CD8-positive, alpha-beta T cell (primary cell): ENCODE measurements at regions of chr13 and their contacts with region 1.

Region 1: DNA sequence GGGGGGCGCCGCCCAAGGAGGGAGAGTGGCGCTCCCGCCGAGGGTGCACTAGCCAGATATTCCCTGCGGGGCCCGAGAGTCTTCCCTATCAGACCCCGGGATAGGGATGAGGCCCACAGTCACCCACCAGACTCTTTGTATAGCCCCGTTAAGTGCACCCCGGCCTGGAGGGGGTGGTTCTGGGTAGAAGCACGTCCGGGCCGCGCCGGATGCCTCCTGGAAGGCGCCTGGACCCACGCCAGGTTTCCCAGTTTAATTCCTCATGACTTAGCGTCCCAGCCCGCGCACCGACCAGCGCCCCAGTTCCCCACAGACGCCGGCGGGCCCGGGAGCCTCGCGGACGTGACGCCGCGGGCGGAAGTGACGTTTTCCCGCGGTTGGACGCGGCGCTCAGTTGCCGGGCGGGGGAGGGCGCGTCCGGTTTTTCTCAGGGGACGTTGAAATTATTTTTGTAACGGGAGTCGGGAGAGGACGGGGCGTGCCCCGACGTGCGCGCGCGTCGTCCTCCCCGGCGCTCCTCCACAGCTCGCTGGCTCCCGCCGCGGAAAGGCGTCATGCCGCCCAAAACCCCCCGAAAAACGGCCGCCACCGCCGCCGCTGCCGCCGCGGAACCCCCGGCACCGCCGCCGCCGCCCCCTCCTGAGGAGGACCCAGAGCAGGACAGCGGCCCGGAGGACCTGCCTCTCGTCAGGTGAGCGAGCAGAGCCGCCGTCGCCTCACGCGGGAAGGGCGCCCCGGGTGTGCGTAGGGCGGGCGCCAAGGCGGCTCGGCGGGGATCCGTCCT is at the start of gene RB1:
- DNase-seq: peak; percentile 81 to 97 (median 90)
- ATAC-seq: peak; percentile 79
- H3K4me3 ChIP-seq: peak within 1 kb of the TSS; percentile 83 to 95
- H3K4me3 Mint-ChIP-seq: peak within 1 kb of the TSS; percentile 98
- H3K27ac ChIP-seq: peak within 1 kb of the TSS; percentile 97 to 99
- H3K27ac Mint-ChIP-seq: peak within 1 kb of the TSS; percentile 97
- H3K4me1 ChIP-seq: peaks cover 17% of the 10 kb centered on the region
- H3K4me1 Mint-ChIP-seq: peaks cover 39% of the 10 kb centered on the region
- H3K27me3 ChIP-seq: no peaks in the 10 kb centered on the region
- H3K27me3 Mint-ChIP-seq: no peaks in the 10 kb centered on the region
- CTCF ChIP-seq: no peak
- total RNA-seq, gene RB1: 11.5 to 12.5 TPM

Region 2: DNA sequence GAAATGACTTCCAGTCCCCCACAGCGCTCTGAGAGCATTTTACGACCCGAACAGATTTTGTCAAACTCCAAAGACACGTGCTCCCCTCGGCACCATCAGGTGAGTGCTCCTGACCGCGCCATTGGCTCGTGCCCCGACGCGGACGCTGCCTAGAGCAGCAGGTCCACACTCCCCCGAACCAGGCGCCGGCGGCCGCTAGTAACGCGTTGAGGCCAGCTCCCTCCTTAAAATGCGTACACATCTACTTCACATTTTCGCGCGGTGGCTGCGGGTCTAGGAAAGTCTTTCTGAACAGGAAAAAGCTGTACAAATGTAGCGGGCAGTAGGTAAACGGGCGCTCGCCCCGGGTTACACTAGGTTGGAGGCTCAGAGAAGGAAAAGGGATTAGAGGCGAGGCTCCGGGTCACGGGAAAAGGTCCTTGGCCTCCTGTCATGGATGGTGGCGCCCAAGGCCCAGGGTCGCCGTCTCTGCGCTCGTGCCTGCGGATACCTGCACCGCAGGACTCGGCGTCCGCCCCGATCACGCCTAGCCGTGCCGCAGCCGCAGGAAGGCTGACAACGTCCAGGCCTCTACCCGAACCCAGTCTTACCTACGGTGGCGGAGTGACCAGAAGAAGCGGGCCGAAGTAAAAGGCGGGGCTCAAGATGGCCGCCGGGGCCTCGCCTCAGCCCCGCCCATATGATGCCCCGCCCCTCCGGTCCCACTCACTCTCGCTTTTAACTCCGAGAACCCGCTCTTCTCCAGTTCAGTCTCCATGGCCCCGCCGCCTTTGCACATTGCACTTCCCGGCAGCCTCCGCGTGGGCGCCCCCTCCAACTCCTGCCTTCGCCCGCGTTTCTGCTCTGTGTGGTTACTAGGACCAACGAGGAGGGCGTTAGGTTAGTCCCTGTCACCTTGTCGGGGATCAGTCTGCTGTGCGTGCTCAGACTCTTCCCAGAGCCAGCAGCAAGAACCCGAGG is 1506.8 kb before region 1 on chr13 and contains the start of gene ESD:
- CTCF ChIA-PET with region 1: no interaction called
- POLR2A ChIA-PET with region 1: no interaction called
- intact Hi-C with region 1: loop called in 1 of 2 experiments (anchors 5 kb)
- DNase-seq: peak; percentile 74 to 92 (median 89)
- ATAC-seq: peak; percentile 94
- H3K4me3 ChIP-seq: peak within 1 kb of the TSS; percentile 76 to 93
- H3K4me3 Mint-ChIP-seq: peak within 1 kb of the TSS; percentile 99
- H3K27ac ChIP-seq: peak within 1 kb of the TSS; percentile 71 to 77
- H3K27ac Mint-ChIP-seq: peak within 1 kb of the TSS; percentile 99
- H3K4me1 ChIP-seq: peaks cover 35% of the 10 kb centered on the region
- H3K4me1 Mint-ChIP-seq: peaks cover 44% of the 10 kb centered on the region
- H3K27me3 ChIP-seq: no peaks in the 10 kb centered on the region
- H3K27me3 Mint-ChIP-seq: no peaks in the 10 kb centered on the region
- CTCF ChIP-seq: no peak
- total RNA-seq, gene ESD: 30.5 to 31.0 TPM

Region 3: DNA sequence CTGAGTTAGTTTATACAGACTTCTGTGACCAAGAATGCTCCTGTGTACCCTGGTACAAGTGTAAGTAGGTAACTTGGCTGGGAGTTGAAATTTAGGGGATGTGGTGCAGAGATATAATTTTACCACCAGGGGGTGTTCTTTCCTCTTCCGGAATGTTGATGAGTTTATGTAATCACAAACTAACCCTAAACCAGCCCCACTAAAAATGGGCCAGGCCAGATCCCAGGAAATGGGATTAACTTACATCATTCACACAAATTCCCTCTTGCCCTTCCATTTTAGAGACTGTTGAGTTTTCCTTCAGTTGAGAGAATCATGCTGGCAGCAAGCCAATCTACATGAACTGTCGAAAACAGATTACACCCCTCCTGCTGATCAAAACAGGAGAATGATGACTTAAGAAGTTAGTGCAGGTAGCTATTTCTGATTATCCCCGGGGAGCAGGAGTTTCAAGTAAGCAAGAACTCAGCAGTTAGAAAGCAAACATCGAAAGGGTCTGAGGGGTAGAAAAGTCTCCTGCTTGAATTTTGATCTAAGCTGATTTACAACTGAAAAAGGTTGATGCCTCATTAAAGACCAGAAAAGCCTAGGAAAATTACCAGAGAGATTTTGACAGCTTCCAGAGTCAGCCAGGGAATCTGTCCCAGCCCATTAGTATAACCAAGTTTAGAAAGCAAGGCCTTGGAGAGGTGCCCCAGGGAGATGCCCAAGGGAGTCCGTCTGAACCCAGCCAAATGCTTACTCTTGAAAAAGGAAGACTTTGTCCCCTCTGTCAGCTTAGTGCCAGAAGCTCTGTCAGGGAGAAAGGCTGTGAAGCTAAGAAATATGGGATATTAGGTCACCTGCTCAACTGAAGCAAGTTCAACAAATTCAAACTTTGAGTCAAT is 176.4 kb before region 1 on chr13:
- CTCF ChIA-PET with region 1: interaction called, 3 read pairs
- POLR2A ChIA-PET with region 1: no interaction called
- intact Hi-C with region 1: loop called (anchors 1 to 5 kb)
- DNase-seq: peak; percentile 11 to 84 (median 39)
- ATAC-seq: peak; percentile 93
- H3K4me3 ChIP-seq: peak overlapping the region in 1 of 2 experiments; percentile 6
- H3K4me3 Mint-ChIP-seq: peak overlapping the region; percentile 55
- H3K27ac ChIP-seq: peak overlapping the region; percentile 30 to 75
- H3K27ac Mint-ChIP-seq: peak overlapping the region; percentile 94
- H3K4me1 ChIP-seq: peaks cover 13% of the 10 kb centered on the region
- H3K4me1 Mint-ChIP-seq: peaks cover 31% of the 10 kb centered on the region
- H3K27me3 ChIP-seq: no peaks in the 10 kb centered on the region
- H3K27me3 Mint-ChIP-seq: no peaks in the 10 kb centered on the region
- CTCF ChIP-seq: peak; percentile 80

Region 4: DNA sequence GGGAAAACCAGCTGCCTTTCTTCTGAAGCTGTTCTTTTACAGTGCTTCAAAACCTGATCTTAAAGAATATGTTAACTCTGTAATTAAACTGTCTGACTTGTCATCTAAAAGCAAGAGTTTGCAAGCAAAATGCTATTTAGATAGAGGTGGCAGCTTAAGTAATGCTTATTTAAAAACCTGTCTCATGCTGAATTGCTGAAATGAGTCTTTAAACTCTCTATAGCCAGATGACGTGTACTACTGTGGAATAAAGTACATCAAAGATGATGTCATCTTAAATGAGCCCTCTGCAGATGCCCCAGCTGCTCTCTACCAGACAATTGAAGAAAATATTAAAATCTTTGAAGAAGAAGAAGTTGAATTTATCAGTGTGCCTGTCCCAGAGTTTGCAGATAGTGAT is 47.6 kb before region 1 on chr13:
- CTCF ChIA-PET with region 1: no interaction called
- POLR2A ChIA-PET with region 1: no interaction called
- intact Hi-C with region 1: loop called (anchors 5 kb)
- DNase-seq: no peak
- ATAC-seq: peak; percentile 40
- H3K4me3 ChIP-seq: no peak overlapping the region
- H3K4me3 Mint-ChIP-seq: no peak overlapping the region
- H3K27ac ChIP-seq: no peak overlapping the region
- H3K27ac Mint-ChIP-seq: peak overlapping the region; percentile 53
- H3K4me1 ChIP-seq: peaks cover 35% of the 10 kb centered on the region
- H3K4me1 Mint-ChIP-seq: peaks cover 79% of the 10 kb centered on the region
- H3K27me3 ChIP-seq: no peaks in the 10 kb centered on the region
- H3K27me3 Mint-ChIP-seq: no peaks in the 10 kb centered on the region
- CTCF ChIP-seq: no peak

Region 5: DNA sequence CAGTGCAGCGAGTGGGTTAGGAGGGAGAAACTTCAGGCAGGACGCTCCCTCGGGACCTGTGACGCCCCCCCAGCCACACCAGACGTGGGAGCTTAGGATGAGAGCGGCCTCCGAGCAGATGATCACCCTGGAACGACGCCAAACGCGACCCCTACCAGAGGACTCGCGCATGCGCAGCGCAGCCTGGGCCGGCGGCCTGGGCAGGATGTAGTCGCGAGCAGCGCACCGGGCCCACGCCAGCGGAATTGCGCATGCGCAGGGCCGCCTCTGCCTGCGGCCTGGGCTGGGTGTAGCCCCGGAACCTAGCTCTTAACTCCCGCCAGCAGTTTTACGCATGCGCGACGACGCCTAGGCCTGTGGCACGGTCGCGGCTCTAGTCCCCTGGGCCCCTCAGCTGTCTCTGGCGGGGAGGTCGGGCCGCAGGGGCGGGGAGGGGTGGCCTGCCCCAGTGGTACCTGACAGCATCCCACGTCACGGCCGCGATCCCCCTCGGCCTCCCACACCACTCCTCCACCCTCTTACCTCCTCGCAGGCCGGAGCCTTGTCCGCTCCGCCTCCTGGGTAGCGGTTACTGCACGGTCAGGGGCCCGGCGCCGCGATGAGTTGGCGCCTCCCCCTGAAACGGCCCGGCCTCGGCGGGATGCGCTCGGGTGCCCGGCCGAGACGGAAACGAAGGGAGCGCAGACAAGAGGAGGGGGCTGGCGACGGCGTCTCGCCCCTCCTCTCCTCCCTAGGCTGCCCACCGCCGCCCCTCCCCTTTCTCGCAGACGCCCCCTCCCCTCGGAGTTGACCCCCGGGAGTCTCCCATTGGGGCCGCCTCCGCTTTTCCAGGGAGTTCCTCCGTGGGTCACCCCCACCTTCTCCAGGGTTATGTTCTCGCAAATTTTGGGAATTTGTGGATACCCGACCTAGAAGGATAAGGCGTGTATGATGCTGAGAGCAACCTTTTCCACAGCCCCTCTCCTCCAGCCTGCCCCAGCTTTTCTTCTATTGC is 229.3 kb after region 1 on chr13 and contains the start of gene RCBTB2:
- CTCF ChIA-PET with region 1: no interaction called
- POLR2A ChIA-PET with region 1: no interaction called
- intact Hi-C with region 1: loop called in 1 of 2 experiments (anchors 1 kb)
- DNase-seq: peak; percentile 95 to 100 (median 99)
- ATAC-seq: peak; percentile 89
- H3K4me3 ChIP-seq: peak within 1 kb of the TSS; percentile 88 to 93
- H3K4me3 Mint-ChIP-seq: peak within 1 kb of the TSS; percentile 96
- H3K27ac ChIP-seq: peak within 1 kb of the TSS; percentile 90 to 97
- H3K27ac Mint-ChIP-seq: peak within 1 kb of the TSS; percentile 99
- H3K4me1 ChIP-seq: peaks cover 14% of the 10 kb centered on the region
- H3K4me1 Mint-ChIP-seq: peaks cover 23% of the 10 kb centered on the region
- H3K27me3 ChIP-seq: no peaks in the 10 kb centered on the region
- H3K27me3 Mint-ChIP-seq: no peaks in the 10 kb centered on the region
- CTCF ChIP-seq: no peak
- total RNA-seq, gene RCBTB2: 1.5 to 2.0 TPM

Region 6: GRCh38 chr13:48571126-48571913 is 267.8 kb after region 1 on chr13:
- CTCF ChIA-PET with region 1: no interaction called
- POLR2A ChIA-PET with region 1: no interaction called
- intact Hi-C with region 1: no loop called
- DNase-seq: no peak
- ATAC-seq: no peak
- H3K4me3 ChIP-seq: no peak overlapping the region
- H3K4me3 Mint-ChIP-seq: no peak overlapping the region
- H3K27ac ChIP-seq: no peak overlapping the region
- H3K27ac Mint-ChIP-seq: no peak overlapping the region
- H3K4me1 ChIP-seq: peaks cover 10% of the 10 kb centered on the region
- H3K4me1 Mint-ChIP-seq: peaks cover 16% of the 10 kb centered on the region
- H3K27me3 ChIP-seq: no peaks in the 10 kb centered on the region
- H3K27me3 Mint-ChIP-seq: peaks cover 18% of the 10 kb centered on the region
- CTCF ChIP-seq: no peak

Region 7: DNA sequence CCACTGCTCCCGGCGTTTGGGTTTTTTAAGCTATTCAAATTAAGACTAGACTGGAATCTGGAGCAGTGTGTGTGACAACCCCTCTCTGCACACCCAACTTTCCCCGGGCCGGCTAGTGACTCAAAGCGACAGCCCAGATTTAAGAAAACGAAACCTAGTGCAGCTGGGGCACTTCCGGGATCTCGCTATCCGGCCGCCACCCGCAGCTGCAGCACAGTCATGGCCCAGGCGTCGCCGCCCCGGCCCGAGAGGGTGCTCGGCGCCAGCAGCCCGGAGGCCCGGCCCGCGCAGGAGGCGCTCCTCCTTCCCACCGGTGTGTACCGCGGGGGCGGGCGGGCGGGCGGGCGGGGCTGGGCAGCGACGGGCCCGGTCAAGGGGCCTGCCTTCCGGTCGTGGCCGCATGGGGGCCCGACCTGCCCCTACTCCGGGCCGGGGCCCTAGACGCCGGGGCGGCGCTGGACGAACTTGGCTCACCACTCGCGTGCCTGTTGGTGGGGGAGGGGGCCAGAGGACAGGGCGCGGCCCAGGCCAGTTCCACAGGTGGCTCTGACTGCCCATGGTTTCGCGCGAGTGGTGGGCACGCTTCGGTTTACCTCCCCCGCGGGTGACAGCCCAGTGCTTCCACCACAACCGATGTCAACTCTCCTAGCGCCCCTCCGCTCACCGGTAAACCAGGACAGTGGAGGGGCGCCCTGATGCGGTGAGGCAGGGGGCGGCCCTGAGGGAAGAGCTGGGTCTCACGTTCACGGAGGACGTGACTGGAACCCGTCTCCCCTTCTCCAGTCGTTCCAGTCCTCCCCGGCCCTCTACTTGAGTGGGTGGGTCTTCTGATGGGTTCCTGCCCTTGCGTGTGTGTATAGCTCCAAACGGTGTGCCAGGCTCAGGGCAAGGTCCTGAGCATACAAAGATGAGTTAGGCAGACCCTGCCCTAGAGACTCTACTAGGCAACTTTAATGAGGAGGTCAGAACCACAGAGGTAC is 1192.5 kb after region 1 on chr13 and contains the start of gene PHF11:
- CTCF ChIA-PET with region 1: no interaction called
- POLR2A ChIA-PET with region 1: no interaction called
- intact Hi-C with region 1: loop called in 1 of 2 experiments (anchors 5 kb)
- DNase-seq: peak; percentile 67 to 94 (median 87)
- ATAC-seq: peak; percentile 80
- H3K4me3 ChIP-seq: peak within 1 kb of the TSS; percentile 68 to 88
- H3K4me3 Mint-ChIP-seq: peak within 1 kb of the TSS; percentile 96
- H3K27ac ChIP-seq: peak within 1 kb of the TSS; percentile 90 to 96
- H3K27ac Mint-ChIP-seq: peak within 1 kb of the TSS; percentile 99
- H3K4me1 ChIP-seq: peaks cover 20% of the 10 kb centered on the region
- H3K4me1 Mint-ChIP-seq: peaks cover 47% of the 10 kb centered on the region
- H3K27me3 ChIP-seq: no peaks in the 10 kb centered on the region
- H3K27me3 Mint-ChIP-seq: no peaks in the 10 kb centered on the region
- CTCF ChIP-seq: no peak
- total RNA-seq, gene PHF11: 93.9 to 98.3 TPM